ENCODE measurements at regions of chrX and their contacts with region 1.

Region 1: DNA sequence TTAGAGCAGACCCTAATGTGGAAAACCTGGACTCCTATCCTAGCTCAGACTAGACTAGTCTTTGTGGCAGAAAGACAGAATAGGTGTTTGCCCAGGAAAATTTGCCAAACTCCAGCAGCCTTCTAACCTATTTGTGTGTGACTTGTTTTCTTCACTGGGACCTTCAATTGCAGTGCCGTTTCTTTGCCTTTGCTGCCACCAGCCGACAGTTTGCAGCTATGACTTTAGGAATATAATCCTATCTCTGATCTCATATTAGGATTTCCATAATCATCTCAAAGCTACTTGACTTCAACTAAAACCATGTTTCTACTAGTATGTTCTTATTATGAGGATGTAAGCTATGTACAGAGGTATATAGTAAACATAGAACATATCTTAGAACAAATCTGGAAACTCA is 60.2 kb upstream of the PGAM4 start:
- DNase-seq: peak; percentile 38
- H3K4me3 ChIP-seq: no peak overlapping the region
- H3K27ac ChIP-seq: no peak overlapping the region
- H3K4me1 ChIP-seq: no peaks in the 10 kb centered on the region
- H3K27me3 ChIP-seq: no peaks in the 10 kb centered on the region
- CTCF ChIP-seq: peak; percentile 72
- EP300 ChIP-seq: no peak
- RAD21 ChIP-seq: peak; percentile 89

Region 2: GRCh38 chrX:78042601-78043000 is 12.9 kb after region 1 on chrX:
- CTCF ChIA-PET with region 1: interaction called, 14 read pairs
- POLR2A ChIA-PET with region 1: no interaction called
- DNase-seq: no peak
- H3K4me3 ChIP-seq: no peak overlapping the region
- H3K27ac ChIP-seq: no peak overlapping the region
- H3K4me1 ChIP-seq: no peaks in the 10 kb centered on the region
- H3K27me3 ChIP-seq: no peaks in the 10 kb centered on the region; the same call in 1 of the 2 replicates
- CTCF ChIP-seq: no peak
- EP300 ChIP-seq: no peak
- RAD21 ChIP-seq: no peak

Measured in SK-N-SH (cell line).